ENCODE measurements at regions of chr1 and their contacts with region 1.

Region 1: GRCh38 chr1:244835276-244836134 is at the start of gene COX20:
- DNase-seq: peak; percentile 84 to 97 (median 93)
- ATAC-seq: peak; percentile 84
- H3K4me3 ChIP-seq: peak within 1 kb of the TSS; percentile 87
- H3K4me3 Mint-ChIP-seq: peak within 1 kb of the TSS; percentile 85 to 100 (median 97)
- H3K27ac ChIP-seq: peak within 1 kb of the TSS; percentile 96
- H3K27ac Mint-ChIP-seq: peak within 1 kb of the TSS; percentile 99 to 100 (median 100)
- H3K4me1 ChIP-seq: peaks cover 17 to 27% of the 10 kb centered on the region in 2 donors
- H3K4me1 Mint-ChIP-seq: peaks cover 34 to 55% (median 48%) of the 10 kb centered on the region in 7 donors
- H3K27me3 ChIP-seq: no peaks in the 10 kb centered on the region
- H3K27me3 Mint-ChIP-seq: no peaks in the 10 kb centered on the region
- total RNA-seq, gene COX20: 23.5 to 31.0 (median 27.8) TPM

Region 2: DNA sequence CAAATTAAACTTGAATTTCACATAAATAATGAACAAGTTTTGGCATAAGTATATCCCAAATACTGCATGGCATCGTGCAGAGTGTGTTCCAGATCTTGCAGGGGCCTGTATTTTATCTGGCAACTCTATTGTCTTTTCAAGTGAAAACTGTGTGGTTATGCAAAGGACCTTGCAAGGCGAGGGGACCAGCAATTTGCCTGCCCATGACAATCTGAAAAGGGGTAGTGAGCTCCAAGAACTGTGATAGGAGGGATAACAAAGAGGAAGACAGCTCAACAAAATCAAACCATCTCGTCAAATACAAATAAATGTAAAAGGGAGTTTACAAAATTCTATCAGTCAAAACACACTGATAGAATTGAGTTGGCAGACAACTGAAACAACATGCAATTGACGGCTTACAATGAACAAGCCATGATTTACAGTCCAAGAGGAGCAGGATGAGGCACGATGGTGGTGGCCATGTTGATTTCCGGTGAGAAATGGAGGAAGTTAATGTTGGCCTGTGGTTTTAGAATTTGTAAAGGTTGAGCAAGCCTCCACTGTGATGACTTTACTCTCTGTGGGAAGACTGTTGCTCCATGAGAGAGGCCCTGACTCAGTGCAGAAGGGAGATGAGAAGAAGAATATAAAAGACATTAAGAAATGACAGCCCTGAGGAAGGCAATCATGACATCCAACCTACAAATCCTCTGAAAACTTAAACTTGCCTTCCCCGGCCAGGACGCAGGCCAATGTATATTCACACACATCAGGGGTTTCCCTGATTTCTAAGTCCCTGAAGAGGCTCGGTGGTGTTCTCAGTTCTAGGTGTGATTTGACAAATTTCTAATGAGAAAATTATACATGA is 516.0 kb before region 1 on chr1:
- CTCF ChIA-PET with region 1: no interaction called
- POLR2A ChIA-PET with region 1: no interaction called
- intact Hi-C with region 1: loop called in 1 of 2 experiments (anchors 10 kb)
- DNase-seq: peak in 1 of 9 donors; percentile 62
- ATAC-seq: peak; percentile 86
- H3K4me3 ChIP-seq: peak overlapping the region; percentile 9
- H3K4me3 Mint-ChIP-seq: peak overlapping the region in 4 of 10 donors; percentile 20 to 76 (median 36)
- H3K27ac ChIP-seq: no peak overlapping the region
- H3K27ac Mint-ChIP-seq: peak overlapping the region in 6 of 9 donors; percentile 20 to 87 (median 53)
- H3K4me1 ChIP-seq: peaks cover 0 to 51% of the 10 kb centered on the region in 2 donors
- H3K4me1 Mint-ChIP-seq: peaks cover 8 to 49% (median 9%) of the 10 kb centered on the region in 7 donors
- H3K27me3 ChIP-seq: no peaks in the 10 kb centered on the region
- H3K27me3 Mint-ChIP-seq: no peaks in the 10 kb centered on the region

Region 3: DNA sequence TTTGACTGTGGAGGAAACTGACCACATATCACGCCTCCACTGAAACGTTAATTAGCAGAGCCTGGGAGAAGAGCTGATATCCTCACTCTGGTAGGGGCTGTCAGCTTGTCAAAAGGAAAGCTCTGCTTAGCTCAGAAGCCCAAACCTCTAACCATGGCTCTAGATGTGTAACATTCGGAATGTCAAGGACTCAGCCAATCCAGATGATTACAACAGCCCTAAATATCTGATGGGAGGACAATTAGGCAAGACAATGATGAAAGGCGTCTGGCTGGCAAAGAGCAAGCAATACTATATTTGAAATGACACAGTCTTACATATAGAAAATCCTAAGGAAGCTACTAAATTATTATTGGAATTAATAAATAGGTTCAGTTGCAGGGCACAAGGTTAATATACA is 45.8 kb before region 1 on chr1:
- CTCF ChIA-PET with region 1: no interaction called
- POLR2A ChIA-PET with region 1: no interaction called
- intact Hi-C with region 1: no loop called
- DNase-seq: no peak
- ATAC-seq: no peak
- H3K4me3 ChIP-seq: no peak overlapping the region
- H3K4me3 Mint-ChIP-seq: no peak overlapping the region
- H3K27ac ChIP-seq: no peak overlapping the region
- H3K27ac Mint-ChIP-seq: no peak overlapping the region
- H3K4me1 ChIP-seq: no peaks in the 10 kb centered on the region
- H3K4me1 Mint-ChIP-seq: no peaks in the 10 kb centered on the region
- H3K27me3 ChIP-seq: no peaks in the 10 kb centered on the region
- H3K27me3 Mint-ChIP-seq: peaks cover 0 to 2% (median 0%) of the 10 kb centered on the region in 5 donors

Region 4: DNA sequence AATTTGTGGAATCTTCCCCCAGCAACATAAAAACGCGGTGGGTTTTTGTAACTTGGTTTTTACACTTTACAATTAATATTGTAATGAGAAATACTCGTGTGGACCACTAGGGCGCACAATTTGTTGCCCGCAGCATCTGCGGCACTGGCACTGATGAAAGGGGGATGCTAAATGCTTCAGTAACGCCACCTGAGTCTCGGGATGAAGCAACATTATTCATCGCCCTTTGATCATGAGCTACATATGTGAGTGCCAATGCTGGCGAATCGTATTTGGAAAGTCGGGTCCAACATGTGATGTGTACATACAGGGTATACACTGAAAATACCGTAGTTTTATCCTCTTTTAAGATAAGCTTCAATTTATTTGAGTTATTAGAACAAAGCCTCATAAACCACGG is 34.3 kb before region 1 on chr1:
- CTCF ChIA-PET with region 1: interaction called, 5 read pairs
- POLR2A ChIA-PET with region 1: interaction called, 25 read pairs
- intact Hi-C with region 1: loop called (anchors 1 kb)
- DNase-seq: peak; percentile 14 to 63 (median 45)
- ATAC-seq: peak; percentile 86
- H3K4me3 ChIP-seq: no peak overlapping the region
- H3K4me3 Mint-ChIP-seq: peak overlapping the region in 4 of 10 donors; percentile 32 to 47 (median 40)
- H3K27ac ChIP-seq: no peak overlapping the region
- H3K27ac Mint-ChIP-seq: peak overlapping the region in 2 of 9 donors; percentile 36 to 77
- H3K4me1 ChIP-seq: no peaks in the 10 kb centered on the region
- H3K4me1 Mint-ChIP-seq: peaks cover 0 to 5% (median 3%) of the 10 kb centered on the region in 7 donors
- H3K27me3 ChIP-seq: no peaks in the 10 kb centered on the region
- H3K27me3 Mint-ChIP-seq: peaks cover 0 to 4% (median 0%) of the 10 kb centered on the region in 5 donors

Region 5: DNA sequence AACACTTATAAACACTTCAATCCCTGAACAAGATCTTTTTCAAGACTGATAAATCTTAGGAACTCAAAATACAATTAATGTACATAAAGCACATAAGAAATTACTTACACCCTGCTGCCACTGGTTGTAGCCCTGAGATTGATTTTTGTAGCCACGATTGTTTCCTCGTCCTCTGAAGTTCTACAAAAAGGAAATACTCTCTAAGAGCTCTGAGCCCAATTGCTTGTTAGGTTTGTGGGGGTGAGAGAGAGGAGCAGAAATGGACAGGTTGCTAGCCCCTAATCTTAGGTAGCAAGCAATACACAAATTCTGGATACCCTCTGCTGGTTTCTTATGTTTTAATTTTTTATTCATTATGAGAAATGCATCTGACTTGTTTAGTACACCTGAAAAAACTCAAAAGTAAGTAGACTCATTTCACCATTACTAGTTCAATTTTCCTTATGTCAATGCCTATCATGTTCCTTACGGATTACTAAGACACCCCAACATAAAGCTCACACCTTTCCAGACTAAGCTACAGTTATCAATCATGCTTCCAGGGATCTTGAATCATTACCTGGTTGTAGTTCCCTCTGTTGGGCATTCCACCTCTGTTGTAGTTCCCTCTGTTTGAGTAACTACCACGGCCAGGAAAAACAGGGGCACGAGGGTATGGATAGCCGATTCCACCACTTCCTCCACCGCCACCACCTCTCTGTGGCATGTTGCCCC is 19.5 kb after region 1 on chr1:
- CTCF ChIA-PET with region 1: interaction called, 83 read pairs
- POLR2A ChIA-PET with region 1: interaction called, 1,419 read pairs
- intact Hi-C with region 1: loop called in 1 of 2 experiments (anchors 1 kb)
- DNase-seq: peak in 1 of 9 donors; percentile 17
- ATAC-seq: peak; percentile 24
- H3K4me3 ChIP-seq: no peak overlapping the region
- H3K4me3 Mint-ChIP-seq: peak overlapping the region; percentile 65 to 82 (median 76)
- H3K27ac ChIP-seq: peak overlapping the region; percentile 42
- H3K27ac Mint-ChIP-seq: peak overlapping the region; percentile 44 to 99 (median 87)
- H3K4me1 ChIP-seq: peaks cover 67 to 71% of the 10 kb centered on the region in 2 donors
- H3K4me1 Mint-ChIP-seq: peaks cover 54 to 100% (median 96%) of the 10 kb centered on the region in 7 donors
- H3K27me3 ChIP-seq: no peaks in the 10 kb centered on the region
- H3K27me3 Mint-ChIP-seq: no peaks in the 10 kb centered on the region

Region 6: GRCh38 chr1:244918421-244919319 is 83.2 kb after region 1 on chr1:
- CTCF ChIA-PET with region 1: interaction called, 3 read pairs
- POLR2A ChIA-PET with region 1: interaction called, 25 read pairs
- intact Hi-C with region 1: loop called in 1 of 2 experiments (anchors 1 kb)
- DNase-seq: peak; percentile 66 to 85 (median 79)
- ATAC-seq: peak; percentile 98
- H3K4me3 ChIP-seq: peak overlapping the region; percentile 62
- H3K4me3 Mint-ChIP-seq: peak overlapping the region; percentile 88 to 96 (median 92)
- H3K27ac ChIP-seq: peak overlapping the region; percentile 56
- H3K27ac Mint-ChIP-seq: peak overlapping the region in 8 of 9 donors; percentile 73 to 96 (median 90)
- H3K4me1 ChIP-seq: peaks cover 6 to 7% of the 10 kb centered on the region in 2 donors
- H3K4me1 Mint-ChIP-seq: peaks cover 0 to 15% (median 10%) of the 10 kb centered on the region in 7 donors
- H3K27me3 ChIP-seq: no peaks in the 10 kb centered on the region
- H3K27me3 Mint-ChIP-seq: peaks cover 0 to 33% (median 0%) of the 10 kb centered on the region in 5 donors

Region 7: GRCh38 chr1:245045087-245045881 is 209.8 kb after region 1 on chr1:
- CTCF ChIA-PET with region 1: interaction called, 13 read pairs
- POLR2A ChIA-PET with region 1: interaction called, 9 read pairs
- intact Hi-C with region 1: loop called (anchors 1 kb)
- DNase-seq: no peak
- ATAC-seq: no peak
- H3K4me3 ChIP-seq: no peak overlapping the region
- H3K4me3 Mint-ChIP-seq: no peak overlapping the region
- H3K27ac ChIP-seq: no peak overlapping the region
- H3K27ac Mint-ChIP-seq: no peak overlapping the region
- H3K4me1 ChIP-seq: no peaks in the 10 kb centered on the region
- H3K4me1 Mint-ChIP-seq: peaks cover 0 to 6% (median 0%) of the 10 kb centered on the region in 7 donors
- H3K27me3 ChIP-seq: no peaks in the 10 kb centered on the region
- H3K27me3 Mint-ChIP-seq: peaks cover 0 to 2% (median 0%) of the 10 kb centered on the region in 5 donors